Activated B cell treated with CpG ODN at 0.5 μM for 24 hours (primary cell): ENCODE measurements at regions of chr6 and their contacts with region 1.

Region 1: DNA sequence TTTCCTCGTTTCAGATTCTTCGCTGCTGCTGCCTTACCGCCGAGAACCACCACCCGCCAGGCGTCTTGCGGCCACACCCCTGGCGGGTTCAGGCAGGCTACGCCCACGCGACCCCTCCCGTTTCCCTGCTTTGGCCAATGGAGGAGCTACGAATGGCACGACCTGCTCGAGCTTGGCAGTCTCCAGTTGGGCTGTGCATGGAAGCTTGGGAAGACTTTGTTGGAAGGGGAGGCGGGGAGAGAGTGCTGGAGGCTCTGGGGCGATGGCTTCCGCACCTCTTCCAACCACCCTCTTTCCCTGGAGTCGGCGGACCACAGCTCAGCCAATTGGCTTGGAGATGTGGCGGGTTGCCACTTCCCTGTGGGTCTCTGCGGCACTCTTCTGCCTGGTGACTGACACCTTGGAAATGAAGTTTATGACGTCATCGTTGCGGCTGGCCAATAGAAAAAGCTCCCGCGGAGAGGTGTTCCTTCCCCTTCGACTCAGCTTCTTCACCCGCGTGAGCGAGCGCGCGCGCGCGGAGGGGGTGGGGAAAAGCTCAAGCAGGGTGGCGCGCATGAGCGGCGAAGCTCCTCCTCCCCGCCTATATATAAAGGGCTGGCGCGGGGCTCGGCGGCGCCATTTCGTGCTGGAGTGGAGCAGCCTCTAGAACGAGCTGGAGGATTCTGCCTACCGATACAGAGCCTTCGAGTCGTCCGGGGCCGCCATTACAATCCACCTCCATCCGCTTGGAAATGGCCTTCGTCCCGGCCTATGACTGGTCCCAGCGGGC is 3.4 kb downstream of the BRD2 start:
- DNase-seq: peak; percentile 99
- ATAC-seq: peak; percentile 47
- H3K4me3 Mint-ChIP-seq: peak overlapping the region; percentile 91
- H3K27ac Mint-ChIP-seq: peak overlapping the region; percentile 99
- H3K4me1 Mint-ChIP-seq: peaks cover 44% of the 10 kb centered on the region
- H3K27me3 Mint-ChIP-seq: no peaks in the 10 kb centered on the region
- CTCF ChIP-seq: no peak

Region 2: GRCh38 chr6:32439602-32440214 is 532.1 kb before region 1 on chr6 and contains the start of gene HLA-DRA:
- CTCF ChIA-PET with region 1: no interaction called
- POLR2A ChIA-PET with region 1: interaction called, 10 read pairs
- intact Hi-C with region 1: loop called (anchors 10 kb)
- DNase-seq: no peak
- ATAC-seq: peak; percentile 72
- H3K4me3 Mint-ChIP-seq: peak within 1 kb of the TSS; percentile 96
- H3K27ac Mint-ChIP-seq: peak within 1 kb of the TSS; percentile 98
- H3K4me1 Mint-ChIP-seq: peaks cover 80% of the 10 kb centered on the region
- H3K27me3 Mint-ChIP-seq: no peaks in the 10 kb centered on the region
- CTCF ChIP-seq: no peak
- total RNA-seq, gene HLA-DRA: 2,835 and 3,035 TPM in 2 replicates

Region 3: GRCh38 chr6:32763427-32763826 is 208.3 kb before region 1 on chr6 and contains the start of gene HLA-DQB2:
- CTCF ChIA-PET with region 1: no interaction called
- POLR2A ChIA-PET with region 1: no interaction called
- intact Hi-C with region 1: no loop called
- DNase-seq: no peak
- ATAC-seq: peak; percentile 50
- H3K4me3 Mint-ChIP-seq: peak within 1 kb of the TSS; percentile 48
- H3K27ac Mint-ChIP-seq: peak within 1 kb of the TSS; percentile 27
- H3K4me1 Mint-ChIP-seq: peaks cover 3% of the 10 kb centered on the region
- H3K27me3 Mint-ChIP-seq: peaks cover 16% of the 10 kb centered on the region
- CTCF ChIP-seq: no peak
- total RNA-seq, gene HLA-DQB2: 95.7 and 107 TPM in 2 replicates

Region 4: GRCh38 chr6:32868257-32868788 is 103.4 kb before region 1 on chr6:
- CTCF ChIA-PET with region 1: interaction called, 5 read pairs
- POLR2A ChIA-PET with region 1: interaction called, 34 read pairs
- intact Hi-C with region 1: no loop called
- DNase-seq: peak; percentile 70
- ATAC-seq: peak; percentile 66
- H3K4me3 Mint-ChIP-seq: no peak overlapping the region
- H3K27ac Mint-ChIP-seq: no peak overlapping the region
- H3K4me1 Mint-ChIP-seq: peaks cover 35% of the 10 kb centered on the region
- H3K27me3 Mint-ChIP-seq: no peaks in the 10 kb centered on the region
- CTCF ChIP-seq: peak; percentile 42

Region 5: GRCh38 chr6:32940656-32941213 is 31.0 kb before region 1 on chr6 and contains the start of gene HLA-DMB:
- CTCF ChIA-PET with region 1: interaction called, 151 read pairs
- POLR2A ChIA-PET with region 1: interaction called, 1,150 read pairs
- intact Hi-C with region 1: loop called (anchors 1 kb)
- DNase-seq: peak; percentile 53
- ATAC-seq: peak; percentile 60
- H3K4me3 Mint-ChIP-seq: peak within 1 kb of the TSS; percentile 98
- H3K27ac Mint-ChIP-seq: peak within 1 kb of the TSS; percentile 99
- H3K4me1 Mint-ChIP-seq: peaks cover 85% of the 10 kb centered on the region
- H3K27me3 Mint-ChIP-seq: no peaks in the 10 kb centered on the region
- CTCF ChIP-seq: no peak
- total RNA-seq, gene HLA-DMB: 341 and 365 TPM in 2 replicates

Region 6: GRCh38 chr6:33014841-33015634 is 43.3 kb after region 1 on chr6:
- CTCF ChIA-PET with region 1: no interaction called
- POLR2A ChIA-PET with region 1: interaction called, 39 read pairs
- intact Hi-C with region 1: no loop called
- DNase-seq: no peak
- ATAC-seq: peak; percentile 34
- H3K4me3 Mint-ChIP-seq: peak overlapping the region; percentile 71
- H3K27ac Mint-ChIP-seq: peak overlapping the region; percentile 98
- H3K4me1 Mint-ChIP-seq: peaks cover 69% of the 10 kb centered on the region
- H3K27me3 Mint-ChIP-seq: no peaks in the 10 kb centered on the region
- CTCF ChIP-seq: no peak

Region 7: GRCh38 chr6:33248925-33249731 is 277.4 kb after region 1 on chr6:
- CTCF ChIA-PET with region 1: no interaction called
- POLR2A ChIA-PET with region 1: interaction called, 18 read pairs
- intact Hi-C with region 1: no loop called
- DNase-seq: peak; percentile 86
- ATAC-seq: peak; percentile 84
- H3K4me3 Mint-ChIP-seq: peak overlapping the region; percentile 91
- H3K27ac Mint-ChIP-seq: peak overlapping the region; percentile 91
- H3K4me1 Mint-ChIP-seq: peaks cover 28% of the 10 kb centered on the region
- H3K27me3 Mint-ChIP-seq: no peaks in the 10 kb centered on the region
- CTCF ChIP-seq: no peak